ENCODE measurements at regions of chr3 and their contacts with region 1.

Region 1: DNA sequence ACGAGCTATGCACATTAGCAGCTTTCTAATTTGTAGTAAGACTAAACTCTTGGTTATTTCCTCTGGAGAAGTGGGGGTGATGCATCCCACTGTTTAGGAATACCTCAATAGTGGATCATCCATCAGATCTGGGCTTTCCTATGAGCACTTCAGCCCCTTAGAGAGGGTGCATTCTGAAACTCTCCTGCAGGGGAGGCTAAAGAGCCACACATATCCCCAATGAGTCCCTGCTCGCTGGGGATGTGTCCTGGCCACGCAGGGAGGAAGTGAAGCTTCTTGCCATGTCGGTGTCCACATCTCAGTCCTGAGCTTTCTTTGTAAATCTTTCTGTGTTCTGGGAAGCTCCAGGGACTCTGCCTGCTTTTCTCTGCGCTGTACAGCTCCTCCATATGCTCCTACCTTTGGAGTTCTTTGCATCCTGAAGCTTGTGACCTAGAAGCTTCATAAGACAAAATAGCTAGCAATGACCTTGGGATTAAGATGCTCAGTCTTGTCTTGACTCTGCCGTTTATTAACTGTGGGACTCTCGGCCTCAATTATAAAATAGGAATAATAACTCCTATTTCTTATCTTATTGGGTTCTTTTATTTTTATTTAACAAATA is 28.3 kb upstream of the MASP1 start:
- DNase-seq: peak; percentile 33 to 58
- ATAC-seq: peak; percentile 87 to 96
- H3K4me3 ChIP-seq: no peak overlapping the region
- H3K27ac ChIP-seq: no peak overlapping the region
- H3K4me1 ChIP-seq: peaks cover 6% of the 10 kb centered on the region; the same call in 1 of the 3 replicates
- CTCF ChIP-seq: peak; percentile 51; the same call in 2 of the 3 replicates
- EP300 ChIP-seq: no peak
- POLR2A ChIP-seq: no peak
- RAD21 ChIP-seq: peak; percentile 69 to 79

Region 2: DNA sequence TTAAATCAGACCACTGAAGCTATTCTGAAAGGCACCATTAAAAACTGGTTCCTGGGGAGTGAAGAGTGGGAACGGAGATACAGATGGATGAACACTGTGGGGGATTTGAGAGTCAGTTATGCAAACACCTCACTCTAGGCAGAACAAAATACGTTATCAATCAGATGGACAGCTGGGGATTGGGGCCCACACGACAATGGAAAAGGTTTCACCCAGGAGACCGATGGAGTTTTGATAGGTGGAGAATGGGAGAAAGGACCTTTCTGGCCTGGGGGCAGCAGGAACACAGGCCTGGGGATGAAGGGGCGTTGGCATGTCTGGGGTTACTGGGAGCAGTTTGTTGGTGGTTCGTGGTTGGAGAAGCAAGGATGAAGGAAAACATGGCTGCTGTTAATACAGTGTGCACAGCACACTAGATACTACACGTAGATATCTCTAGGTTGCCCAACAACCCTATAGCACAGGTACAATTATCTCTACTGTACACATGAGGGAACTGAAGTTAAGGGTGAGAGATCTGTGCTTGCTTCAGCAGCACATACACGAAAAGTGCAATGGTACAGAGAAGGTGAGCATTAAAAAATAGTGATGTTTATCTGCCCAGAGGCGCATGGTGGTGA is 372.9 kb before region 1 on chr3:
- CTCF ChIA-PET with region 1: no interaction called
- POLR2A ChIA-PET with region 1: no interaction called
- DNase-seq: no peak
- ATAC-seq: no peak
- H3K4me3 ChIP-seq: no peak overlapping the region
- H3K27ac ChIP-seq: no peak overlapping the region
- H3K4me1 ChIP-seq: no peaks in the 10 kb centered on the region
- CTCF ChIP-seq: no peak
- EP300 ChIP-seq: no peak
- POLR2A ChIP-seq: no peak
- RAD21 ChIP-seq: no peak

Region 3: DNA sequence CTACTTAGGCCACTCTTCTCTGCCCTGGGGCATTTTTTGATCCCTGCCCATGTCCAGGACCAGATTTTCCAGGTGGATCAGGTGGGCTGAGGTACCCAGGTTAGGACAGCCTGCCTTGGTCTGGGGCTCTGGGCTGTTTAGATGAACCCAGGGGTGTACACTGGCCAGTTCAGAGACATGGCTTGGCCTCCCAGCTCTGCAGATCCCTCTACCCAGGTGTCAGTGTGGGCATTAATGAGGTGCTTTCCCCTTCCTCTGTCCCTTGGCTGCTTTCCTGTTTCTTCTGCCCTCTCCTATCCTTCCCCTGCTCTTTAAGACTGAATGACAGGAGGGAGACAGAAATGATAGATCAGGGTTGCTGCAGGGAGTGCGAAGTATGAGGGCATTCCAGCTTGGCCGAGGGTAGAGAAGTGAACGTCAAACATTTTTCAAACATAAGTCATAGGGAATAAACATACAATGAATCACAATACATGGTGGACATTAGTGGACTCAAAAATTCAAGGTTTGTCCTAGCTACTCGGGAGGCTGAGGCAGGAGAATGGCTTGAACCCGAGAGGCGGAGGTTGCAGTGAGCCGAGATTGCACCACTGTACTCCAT is 92.0 kb before region 1 on chr3:
- CTCF ChIA-PET with region 1: interaction called, 39 read pairs
- POLR2A ChIA-PET with region 1: no interaction called
- DNase-seq: peak; percentile 30 to 33
- ATAC-seq: peak; percentile 86 to 93
- H3K4me3 ChIP-seq: no peak overlapping the region
- H3K27ac ChIP-seq: peak overlapping the region in 1 of 2 experiments; percentile 19; a peak in 1 of 6 replicates
- H3K4me1 ChIP-seq: peaks cover 14% of the 10 kb centered on the region
- CTCF ChIP-seq: no peak
- EP300 ChIP-seq: no peak
- POLR2A ChIP-seq: no peak
- RAD21 ChIP-seq: no peak

Region 4: GRCh38 chr3:187465503-187465902 is 145.7 kb after region 1 on chr3:
- CTCF ChIA-PET with region 1: no interaction called
- POLR2A ChIA-PET with region 1: no interaction called
- DNase-seq: no peak
- ATAC-seq: no peak
- H3K4me3 ChIP-seq: no peak overlapping the region
- H3K27ac ChIP-seq: no peak overlapping the region
- H3K4me1 ChIP-seq: no peaks in the 10 kb centered on the region
- CTCF ChIP-seq: no peak
- EP300 ChIP-seq: no peak
- POLR2A ChIP-seq: no peak
- RAD21 ChIP-seq: no peak

Region 5: DNA sequence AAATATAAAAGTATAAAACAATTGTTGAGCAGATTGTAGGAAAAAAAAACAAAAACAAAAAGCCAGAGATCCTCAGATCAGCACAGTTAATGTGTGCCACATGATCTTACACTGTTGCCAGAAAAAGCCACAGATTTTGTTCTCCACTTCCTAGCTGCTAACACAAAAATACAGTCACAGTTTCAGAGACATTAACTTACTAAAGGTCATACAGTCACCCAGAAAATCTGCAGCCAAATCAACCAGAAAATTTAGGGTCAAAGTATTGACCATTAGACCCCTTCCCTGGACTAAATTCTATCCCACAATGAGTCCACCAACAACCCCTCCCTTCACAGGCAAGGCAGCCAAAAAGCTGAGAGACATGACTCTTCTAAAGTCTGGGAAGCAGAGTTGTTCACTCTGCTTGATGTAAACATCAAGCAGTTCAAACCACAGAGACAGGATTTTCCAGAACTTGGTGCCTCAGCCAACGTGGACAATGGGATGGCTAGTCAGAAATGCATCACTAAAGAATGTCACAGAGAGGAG is 291.2 kb after region 1 on chr3:
- CTCF ChIA-PET with region 1: interaction called, 21 read pairs
- POLR2A ChIA-PET with region 1: no interaction called
- DNase-seq: no peak
- ATAC-seq: no peak
- H3K4me3 ChIP-seq: no peak overlapping the region
- H3K27ac ChIP-seq: no peak overlapping the region
- H3K4me1 ChIP-seq: no peaks in the 10 kb centered on the region
- CTCF ChIP-seq: no peak
- EP300 ChIP-seq: no peak
- POLR2A ChIP-seq: no peak
- RAD21 ChIP-seq: no peak

Region 6: GRCh38 chr3:187646906-187647660 is 327.3 kb after region 1 on chr3:
- CTCF ChIA-PET with region 1: interaction called, 10 read pairs
- POLR2A ChIA-PET with region 1: no interaction called
- DNase-seq: no peak
- ATAC-seq: no peak
- H3K4me3 ChIP-seq: no peak overlapping the region
- H3K27ac ChIP-seq: no peak overlapping the region
- H3K4me1 ChIP-seq: no peaks in the 10 kb centered on the region
- CTCF ChIP-seq: no peak
- EP300 ChIP-seq: no peak
- POLR2A ChIP-seq: no peak
- RAD21 ChIP-seq: no peak

Region 7: GRCh38 chr3:187679638-187680396 is 360.0 kb after region 1 on chr3:
- CTCF ChIA-PET with region 1: interaction called, 564 read pairs
- POLR2A ChIA-PET with region 1: no interaction called
- DNase-seq: peak; percentile 41 to 66
- ATAC-seq: peak; percentile 94 to 97
- H3K4me3 ChIP-seq: no peak overlapping the region
- H3K27ac ChIP-seq: no peak overlapping the region
- H3K4me1 ChIP-seq: no peaks in the 10 kb centered on the region
- CTCF ChIP-seq: peak; percentile 75
- EP300 ChIP-seq: no peak
- POLR2A ChIP-seq: no peak
- RAD21 ChIP-seq: peak; percentile 79 to 89

Region 8: GRCh38 chr3:187714404-187714979 is 394.7 kb after region 1 on chr3:
- CTCF ChIA-PET with region 1: interaction called, 67 read pairs
- POLR2A ChIA-PET with region 1: no interaction called
- DNase-seq: peak; percentile 59 to 65
- ATAC-seq: peak; percentile 91 to 94
- H3K4me3 ChIP-seq: no peak overlapping the region
- H3K27ac ChIP-seq: no peak overlapping the region
- H3K4me1 ChIP-seq: no peaks in the 10 kb centered on the region
- CTCF ChIP-seq: peak; percentile 71
- EP300 ChIP-seq: no peak
- POLR2A ChIP-seq: no peak
- RAD21 ChIP-seq: peak; percentile 85 to 91

Measured in A549 (cell line).